ENCODE measurements at regions of chr12 and their contacts with region 1.

Region 1: GRCh38 chr12:98490501-98491453 is 24.6 kb upstream of the TMPO start:
- DNase-seq: peak; percentile 86
- ATAC-seq: peak; percentile 83
- H3K4me3 Mint-ChIP-seq: peak overlapping the region; percentile 30
- H3K27ac Mint-ChIP-seq: peak overlapping the region; percentile 90
- H3K4me1 Mint-ChIP-seq: peaks cover 5% of the 10 kb centered on the region
- H3K27me3 Mint-ChIP-seq: peaks cover 13% of the 10 kb centered on the region

Region 2: DNA sequence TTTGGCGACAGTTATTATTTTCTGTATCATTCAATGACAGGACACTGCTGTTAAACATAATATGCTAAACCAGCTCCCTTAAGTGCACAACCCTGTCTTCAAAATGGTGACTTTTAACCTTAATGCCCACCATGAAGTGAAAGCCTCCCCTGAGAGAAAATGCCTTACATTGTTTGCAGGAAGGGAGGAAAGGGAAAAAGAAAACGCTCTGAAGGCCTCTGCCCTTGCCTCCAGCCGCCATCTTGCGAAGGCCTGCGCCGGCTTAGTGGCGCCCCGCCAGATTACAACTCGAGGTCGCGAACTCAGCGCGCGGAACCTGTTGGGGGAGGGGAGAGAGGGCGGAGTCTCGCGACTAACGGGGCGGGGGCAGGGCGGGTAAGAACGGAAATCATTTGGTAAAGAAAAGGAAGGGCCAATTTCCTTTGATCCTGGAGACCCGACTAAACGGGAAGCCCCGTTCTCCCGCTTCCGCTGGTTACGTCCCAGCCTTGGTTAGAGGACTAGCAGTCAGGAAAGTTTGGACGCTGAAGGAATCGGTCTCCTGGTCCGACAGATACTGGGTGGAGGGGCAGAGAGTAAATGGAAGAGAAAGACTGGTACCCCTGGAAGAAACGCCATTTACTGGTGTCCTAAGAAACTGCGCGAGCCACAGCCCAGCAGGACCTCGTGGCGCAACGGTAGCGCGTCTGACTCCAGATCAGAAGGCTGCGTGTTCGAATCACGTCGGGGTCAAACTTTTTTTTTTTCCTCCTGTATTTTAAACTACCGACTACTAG is 13.0 kb after region 1 on chr12:
- CTCF ChIA-PET with region 1: interaction called, 10 read pairs
- DNase-seq: peak; percentile 97
- ATAC-seq: peak; percentile 88
- H3K4me3 Mint-ChIP-seq: peak overlapping the region; percentile 97
- H3K27ac Mint-ChIP-seq: peak overlapping the region; percentile 99
- H3K4me1 Mint-ChIP-seq: peaks cover 30% of the 10 kb centered on the region
- H3K27me3 Mint-ChIP-seq: peaks cover 13% of the 10 kb centered on the region

Region 3: GRCh38 chr12:98532681-98533304 is 42.0 kb after region 1 on chr12:
- CTCF ChIA-PET with region 1: interaction called, 14 read pairs
- DNase-seq: no peak
- ATAC-seq: peak; percentile 47
- H3K4me3 Mint-ChIP-seq: no peak overlapping the region
- H3K27ac Mint-ChIP-seq: peak overlapping the region; percentile 40
- H3K4me1 Mint-ChIP-seq: peaks cover 20% of the 10 kb centered on the region
- H3K27me3 Mint-ChIP-seq: no peaks in the 10 kb centered on the region

Region 4: GRCh38 chr12:98544751-98545150 is 54.0 kb after region 1 on chr12:
- CTCF ChIA-PET with region 1: no interaction called
- DNase-seq: no peak
- ATAC-seq: no peak
- H3K4me3 Mint-ChIP-seq: no peak overlapping the region
- H3K27ac Mint-ChIP-seq: no peak overlapping the region
- H3K4me1 Mint-ChIP-seq: peaks cover 23% of the 10 kb centered on the region
- H3K27me3 Mint-ChIP-seq: no peaks in the 10 kb centered on the region